Adrenal gland (tissue), 19 donors: ENCODE measurements at regions of chr9 and their contacts with region 1.

Region 1: DNA sequence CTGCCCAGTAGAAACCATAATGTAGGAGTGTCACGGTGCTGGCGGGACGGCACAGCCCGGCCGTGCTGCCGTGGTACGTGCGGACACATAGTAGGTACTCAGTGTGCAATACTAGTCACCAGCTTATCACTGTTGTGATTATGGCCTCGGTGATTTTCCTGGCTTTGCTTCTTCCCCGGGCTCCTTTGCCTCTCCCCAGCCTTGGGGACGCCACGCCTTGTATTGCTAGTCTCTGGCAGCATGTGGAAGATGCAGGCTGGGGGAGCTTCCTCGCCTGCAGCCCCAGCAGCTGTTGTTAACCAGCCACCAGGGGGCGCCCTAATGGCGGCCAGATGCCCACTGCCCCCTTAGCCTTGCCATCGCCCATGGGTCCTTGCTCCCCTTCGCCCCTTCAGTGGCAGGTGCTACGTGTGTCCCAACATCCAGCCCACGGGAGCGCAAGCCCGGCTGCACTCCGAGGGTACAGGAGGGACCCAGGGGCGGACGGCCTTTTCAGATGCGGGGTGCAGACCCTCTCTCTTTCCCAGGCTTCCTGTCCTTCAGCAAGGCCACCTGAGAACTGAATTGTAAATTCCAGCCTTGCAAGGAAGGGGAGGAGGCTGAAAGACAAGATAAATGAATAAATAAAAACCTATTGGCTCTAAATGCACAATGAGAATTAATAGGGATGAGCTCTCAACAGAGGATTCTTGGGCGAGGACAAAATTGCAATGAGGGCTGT is 8.0 kb downstream of the NTNG2 start:
- DNase-seq: peak; percentile 45 to 71 (median 61)
- H3K4me3 ChIP-seq: no peak overlapping the region
- H3K27ac ChIP-seq: no peak overlapping the region
- H3K4me1 ChIP-seq: peaks cover 7 to 9% of the 10 kb centered on the region in 2 donors
- H3K27me3 ChIP-seq: no peaks in the 10 kb centered on the region
- CTCF ChIP-seq: peak; percentile 67 to 80 (median 74)
- POLR2A ChIP-seq: no peak

Region 2: DNA sequence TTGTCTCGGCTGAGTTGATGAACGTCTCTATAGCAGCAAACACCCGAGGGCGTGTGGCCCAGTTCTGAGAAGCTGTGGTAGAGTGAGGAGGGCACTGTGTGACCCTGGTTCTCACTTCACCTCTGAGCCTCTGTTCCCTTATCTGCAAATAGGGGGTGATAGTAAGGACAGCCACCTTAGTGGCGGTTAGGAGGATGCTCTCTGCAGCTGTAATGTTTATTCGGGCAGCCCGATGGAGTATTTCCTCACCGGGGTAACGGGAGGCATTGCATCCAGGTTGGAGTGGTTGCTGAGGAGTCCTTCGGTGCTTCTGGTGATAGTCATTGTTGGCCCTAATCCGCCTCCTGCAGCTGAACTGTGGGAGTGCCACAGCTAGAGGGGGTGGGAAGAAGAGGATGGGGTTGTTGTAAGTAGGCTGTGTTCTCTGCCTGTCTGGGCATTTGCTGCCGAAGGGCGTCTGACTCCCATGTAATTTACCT is 762.1 kb before region 1 on chr9:
- intact Hi-C with region 1: loop called in 1 of 2 experiments (anchors 10 kb)
- DNase-seq: peak in 5 of 7 donors; percentile 48 to 80 (median 56)
- H3K4me3 ChIP-seq: no peak overlapping the region
- H3K27ac ChIP-seq: peak overlapping the region; percentile 33 to 93 (median 63)
- H3K4me1 ChIP-seq: peaks cover 73 to 97% of the 10 kb centered on the region in 2 donors
- H3K27me3 ChIP-seq: no peaks in the 10 kb centered on the region
- CTCF ChIP-seq: peak in 5 of 6 experiments; percentile 18 to 55 (median 46)
- POLR2A ChIP-seq: peak in 1 of 2 donors; percentile 13

Region 3: DNA sequence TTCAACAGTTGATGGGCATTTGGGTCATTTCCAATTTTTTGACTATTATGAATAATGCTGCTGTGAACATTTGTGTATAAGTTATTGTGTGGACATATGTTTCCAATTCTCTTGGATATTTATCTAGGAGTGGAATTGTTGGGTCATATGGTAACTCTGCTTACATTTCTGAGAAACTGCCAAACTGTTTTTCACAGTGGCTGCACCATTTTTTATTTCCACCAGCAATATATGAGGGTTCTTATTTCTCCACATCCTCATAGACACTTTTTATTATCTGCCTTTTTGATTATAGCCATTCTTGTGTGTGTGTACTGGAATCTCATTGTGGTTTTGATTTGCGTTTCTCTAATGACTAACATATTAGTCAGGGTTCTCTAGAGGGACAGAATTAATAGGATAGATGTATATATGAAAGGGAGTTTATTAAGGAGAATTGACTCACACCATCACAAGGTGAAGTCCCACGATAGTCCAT is 75.5 kb before region 1 on chr9:
- intact Hi-C with region 1: no loop called
- DNase-seq: no peak
- H3K4me3 ChIP-seq: no peak overlapping the region
- H3K27ac ChIP-seq: no peak overlapping the region
- H3K4me1 ChIP-seq: no peaks in the 10 kb centered on the region
- H3K27me3 ChIP-seq: peaks cover 5% of the 10 kb centered on the region
- CTCF ChIP-seq: no peak
- POLR2A ChIP-seq: no peak

Region 4: GRCh38 chr9:132235946-132236661 is 66.3 kb after region 1 on chr9:
- intact Hi-C with region 1: loop called (anchors 5 kb)
- DNase-seq: peak; percentile 68 to 90 (median 81)
- H3K4me3 ChIP-seq: no peak overlapping the region
- H3K27ac ChIP-seq: no peak overlapping the region
- H3K4me1 ChIP-seq: peaks cover 0 to 7% of the 10 kb centered on the region in 2 donors
- H3K27me3 ChIP-seq: peaks cover 4% of the 10 kb centered on the region
- CTCF ChIP-seq: peak; percentile 82 to 96 (median 90)
- POLR2A ChIP-seq: no peak